ENCODE measurements at regions of chr21 and their contacts with region 1.

Region 1: GRCh38 chr21:29849735-29850176 is 90.0 kb downstream of the GRIK1 start:
- DNase-seq: no peak
- ATAC-seq: peak; percentile 67 to 87 (median 80)
- H3K4me3 ChIP-seq: no peak overlapping the region
- H3K27ac ChIP-seq: no peak overlapping the region
- H3K4me1 ChIP-seq: no peaks in the 10 kb centered on the region
- H3K27me3 ChIP-seq: no peaks in the 10 kb centered on the region
- CTCF ChIP-seq: peak; percentile 63

Region 2: GRCh38 chr21:29080454-29080941 is 769.3 kb before region 1 on chr21:
- intact Hi-C with region 1: loop called in 1 of 2 experiments (anchors 10 kb)
- DNase-seq: no peak
- ATAC-seq: peak in 3 of 4 donors; percentile 12 to 52 (median 17)
- H3K4me3 ChIP-seq: no peak overlapping the region
- H3K27ac ChIP-seq: peak overlapping the region; percentile 17
- H3K4me1 ChIP-seq: no peaks in the 10 kb centered on the region
- H3K27me3 ChIP-seq: no peaks in the 10 kb centered on the region
- CTCF ChIP-seq: no peak

Region 3: DNA sequence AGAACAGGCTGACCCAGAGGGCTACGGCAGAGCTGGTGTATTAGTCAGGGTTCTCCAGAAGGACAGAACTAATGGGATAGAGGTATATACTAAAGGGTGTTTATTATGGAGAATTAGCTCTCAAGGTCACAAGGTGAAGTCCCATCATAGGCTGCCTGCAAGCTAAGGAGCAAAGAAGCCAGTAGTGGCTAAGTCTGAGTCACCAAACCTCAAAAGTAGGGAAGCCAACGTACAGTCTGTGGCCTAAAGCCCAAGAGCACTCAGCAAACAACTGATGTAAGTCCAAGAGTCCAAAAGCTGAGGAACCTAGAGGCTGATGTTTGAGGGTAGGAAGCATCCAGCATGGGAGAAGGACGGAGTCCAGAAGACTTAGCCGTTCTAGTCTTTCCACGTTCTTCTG is 371.8 kb before region 1 on chr21:
- intact Hi-C with region 1: loop called (anchors 2 to 5 kb)
- DNase-seq: no peak
- ATAC-seq: no peak
- H3K4me3 ChIP-seq: no peak overlapping the region
- H3K27ac ChIP-seq: no peak overlapping the region
- H3K4me1 ChIP-seq: no peaks in the 10 kb centered on the region
- H3K27me3 ChIP-seq: no peaks in the 10 kb centered on the region
- CTCF ChIP-seq: no peak

Region 4: DNA sequence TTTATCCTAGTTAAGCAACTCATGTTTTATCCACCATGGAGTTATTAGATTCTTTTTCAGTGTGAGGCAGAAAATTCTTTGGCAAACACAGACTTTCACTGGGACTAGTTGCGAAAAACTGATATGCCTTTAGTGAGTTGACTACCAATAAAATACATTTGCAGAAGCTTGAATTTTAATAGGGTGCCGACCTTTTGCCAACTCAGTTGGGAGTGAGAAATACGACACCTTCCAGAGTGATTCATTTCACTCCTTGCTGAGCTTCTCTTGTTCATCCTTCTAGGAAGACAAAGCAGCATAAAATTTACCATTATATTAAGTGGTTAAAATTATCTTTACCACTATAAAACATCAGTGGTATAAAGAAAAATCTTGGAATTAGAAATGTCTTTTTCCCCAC is 499.8 kb after region 1 on chr21:
- intact Hi-C with region 1: no loop called
- DNase-seq: no peak
- ATAC-seq: no peak
- H3K4me3 ChIP-seq: no peak overlapping the region
- H3K27ac ChIP-seq: no peak overlapping the region
- H3K4me1 ChIP-seq: no peaks in the 10 kb centered on the region
- H3K27me3 ChIP-seq: no peaks in the 10 kb centered on the region
- CTCF ChIP-seq: no peak

Measured in psoas muscle (tissue), 8 donors.